HEK293 (cell line): ENCODE measurements at regions of chr9 and their contacts with region 1.

Region 1: DNA sequence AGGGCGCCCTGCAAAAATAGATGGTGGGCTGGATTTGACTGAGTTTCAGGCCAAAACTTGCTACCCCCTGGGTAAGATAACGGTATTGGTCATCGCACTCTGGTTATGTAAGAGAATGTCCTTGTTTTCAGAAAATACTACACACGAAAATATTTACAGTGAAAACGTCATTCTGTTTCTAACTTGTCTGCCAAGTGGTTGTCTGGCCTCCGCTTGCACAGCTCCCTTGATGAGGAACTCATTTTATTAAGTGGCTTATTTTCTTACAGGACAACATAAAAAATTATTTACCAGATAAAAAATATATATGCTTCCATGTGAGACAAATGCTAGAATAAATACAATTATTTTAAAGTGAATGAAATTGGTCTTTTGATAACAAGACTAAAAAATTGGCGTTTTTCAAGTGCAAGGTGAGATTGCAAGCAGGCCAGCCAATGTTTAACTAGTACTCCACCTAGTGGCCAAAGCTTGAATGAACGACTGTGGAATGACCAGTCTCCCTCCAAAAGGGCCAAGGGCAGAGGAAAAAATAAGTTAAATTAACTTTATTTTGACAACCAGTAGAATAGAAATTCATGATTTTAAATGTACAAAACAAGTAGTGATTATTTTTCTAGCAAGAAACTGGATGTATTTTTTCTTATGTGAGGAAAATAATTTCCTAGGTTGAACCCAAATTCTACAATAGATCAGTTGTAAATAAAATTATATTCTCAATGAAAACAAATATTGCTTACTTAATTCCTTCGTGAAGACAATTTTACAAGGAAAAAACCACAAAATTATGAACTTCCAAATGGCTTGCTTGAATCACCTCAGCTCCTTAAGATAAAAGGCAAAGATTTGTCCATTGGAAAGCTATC is 93.2 kb downstream of the ZFAND5 start:
- H3K4me3 ChIP-seq: no peak overlapping the region
- H3K27ac ChIP-seq: no peak overlapping the region
- H3K4me1 ChIP-seq: no peaks in the 10 kb centered on the region
- CTCF ChIP-seq: no peak; the same call in 1 of the 2 replicates

Region 2: GRCh38 chr9:72203205-72203803 is 68.5 kb before region 1 on chr9:
- CTCF ChIA-PET with region 1: interaction called, 23 read pairs
- POLR2A ChIA-PET with region 1: no interaction called
- H3K4me3 ChIP-seq: no peak overlapping the region
- H3K27ac ChIP-seq: no peak overlapping the region
- H3K4me1 ChIP-seq: no peaks in the 10 kb centered on the region
- CTCF ChIP-seq: peak; percentile 28; the same call in 1 of the 2 replicates

Region 3: GRCh38 chr9:72251589-72251988 is 20.3 kb before region 1 on chr9:
- CTCF ChIA-PET with region 1: interaction called, 12 read pairs
- POLR2A ChIA-PET with region 1: no interaction called
- H3K4me3 ChIP-seq: no peak overlapping the region
- H3K27ac ChIP-seq: no peak overlapping the region
- H3K4me1 ChIP-seq: no peaks in the 10 kb centered on the region
- CTCF ChIP-seq: no peak

Region 4: GRCh38 chr9:72428329-72428728 is 156.5 kb after region 1 on chr9:
- CTCF ChIA-PET with region 1: no interaction called
- POLR2A ChIA-PET with region 1: no interaction called
- H3K4me3 ChIP-seq: no peak overlapping the region
- H3K27ac ChIP-seq: no peak overlapping the region
- H3K4me1 ChIP-seq: no peaks in the 10 kb centered on the region; the same call in 1 of the 2 replicates
- CTCF ChIP-seq: no peak